ENCODE measurements at regions of chr2 and their contacts with region 1.

Region 1: GRCh38 chr2:216666461-216667233 is 28.7 kb downstream of the IGFBP5 start:
- DNase-seq: peak; percentile 62 to 86 (median 77)
- H3K4me3 ChIP-seq: no peak overlapping the region
- H3K27ac ChIP-seq: no peak overlapping the region
- H3K4me1 ChIP-seq: peaks cover 12% of the 10 kb centered on the region
- H3K27me3 ChIP-seq: no peaks in the 10 kb centered on the region
- CTCF ChIP-seq: peak; percentile 91 to 96 (median 95)
- EP300 ChIP-seq: no peak
- POLR2A ChIP-seq: no peak

Region 2: GRCh38 chr2:215435809-215436704 is 1230.6 kb before region 1 on chr2 and contains the start of gene FN1:
- intact Hi-C with region 1: loop called in 1 of 4 experiments (anchors 10 kb)
- DNase-seq: peak; percentile 94 to 97 (median 96)
- H3K4me3 ChIP-seq: peak within 1 kb of the TSS; percentile 78
- H3K27ac ChIP-seq: peak within 1 kb of the TSS; percentile 77 to 92
- H3K4me1 ChIP-seq: no peaks in the 10 kb centered on the region
- H3K27me3 ChIP-seq: no peaks in the 10 kb centered on the region
- CTCF ChIP-seq: no peak
- EP300 ChIP-seq: no peak
- POLR2A ChIP-seq: peak; percentile 73
- total RNA-seq, gene FN1: 96.3 to 438 (median 208) TPM

Region 3: DNA sequence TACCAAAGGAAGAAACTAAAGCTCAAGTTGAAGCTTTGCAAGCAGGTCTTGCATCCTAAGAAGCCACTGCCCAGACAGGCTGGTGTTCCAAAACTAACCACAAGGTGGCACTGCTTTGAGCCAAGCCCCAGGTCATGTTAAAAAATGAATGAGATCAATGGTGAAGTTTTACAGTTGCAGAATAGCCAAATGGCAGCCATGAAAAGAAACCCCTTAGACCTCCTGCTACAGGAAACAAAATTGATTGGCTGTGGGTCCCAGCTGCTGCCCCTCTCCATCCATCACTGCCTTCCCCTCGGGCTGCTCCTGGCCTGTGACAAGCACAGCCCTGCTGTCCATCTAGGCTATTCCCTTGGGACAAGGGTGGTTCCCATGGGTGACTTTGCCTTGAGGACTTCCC is 632.6 kb before region 1 on chr2:
- intact Hi-C with region 1: loop called in 1 of 4 experiments (anchors 10 kb)
- DNase-seq: peak; percentile 19 to 69 (median 62)
- H3K4me3 ChIP-seq: no peak overlapping the region
- H3K27ac ChIP-seq: no peak overlapping the region
- H3K4me1 ChIP-seq: peaks cover 2% of the 10 kb centered on the region
- H3K27me3 ChIP-seq: no peaks in the 10 kb centered on the region
- CTCF ChIP-seq: peak; percentile 33 to 46 (median 34)
- EP300 ChIP-seq: no peak
- POLR2A ChIP-seq: no peak

Region 4: DNA sequence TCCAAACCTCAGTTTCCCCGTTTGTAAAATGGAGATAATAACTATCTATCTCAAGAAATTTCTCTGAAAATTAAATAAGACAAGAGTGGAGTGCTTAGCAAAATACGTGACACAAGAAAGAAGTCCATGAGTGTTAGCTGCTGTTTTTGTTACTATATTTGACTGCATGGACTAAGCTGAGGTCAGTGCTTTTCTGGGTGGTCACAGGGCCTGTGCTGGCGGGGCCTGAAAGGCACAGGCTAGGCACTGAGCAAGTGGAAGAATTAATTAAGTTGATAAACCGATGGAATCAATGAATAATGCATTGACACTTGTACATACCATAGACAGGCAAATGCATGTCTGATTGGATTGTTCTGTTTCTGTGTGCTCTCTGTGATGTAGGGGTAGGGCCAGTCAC is 140.7 kb before region 1 on chr2:
- intact Hi-C with region 1: loop called in 2 of 4 experiments (anchors 2 kb)
- DNase-seq: no peak
- H3K4me3 ChIP-seq: no peak overlapping the region
- H3K27ac ChIP-seq: no peak overlapping the region
- H3K4me1 ChIP-seq: no peaks in the 10 kb centered on the region
- H3K27me3 ChIP-seq: no peaks in the 10 kb centered on the region
- CTCF ChIP-seq: no peak
- EP300 ChIP-seq: no peak
- POLR2A ChIP-seq: no peak

Region 5: DNA sequence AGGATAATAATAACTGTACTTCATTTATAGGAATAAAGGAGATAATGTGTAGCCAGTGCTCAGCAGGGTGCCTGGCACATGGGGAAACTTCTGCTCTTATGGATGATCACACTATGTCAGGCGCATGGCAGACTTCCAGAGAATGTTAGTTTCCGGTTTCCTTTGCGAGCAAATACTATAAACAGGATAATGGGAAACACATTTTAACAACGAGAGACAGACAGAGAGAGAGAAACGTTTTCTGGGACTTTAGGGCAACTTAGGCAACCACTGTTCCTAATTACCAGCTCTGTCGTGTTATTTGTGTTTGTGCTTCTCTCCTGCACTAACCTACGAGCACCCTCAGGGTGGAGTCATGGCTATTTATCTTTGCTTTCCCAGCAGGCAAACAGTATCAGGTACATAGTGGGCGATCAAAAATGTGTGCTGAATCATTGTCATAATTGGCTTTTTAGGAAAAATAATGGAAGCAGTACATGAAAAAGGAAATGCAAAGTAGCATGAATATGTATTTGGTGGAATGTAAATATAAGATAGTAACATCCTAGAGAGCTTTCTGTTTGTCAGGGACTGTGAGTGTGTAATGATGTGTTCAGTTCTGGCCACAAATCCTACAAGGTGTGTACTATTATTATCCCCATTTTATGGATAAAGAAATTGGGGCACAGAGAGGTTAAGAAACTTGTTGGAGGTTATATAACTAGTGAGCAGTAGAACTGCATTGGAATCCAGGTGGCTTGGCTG is 70.2 kb before region 1 on chr2:
- intact Hi-C with region 1: loop called in 1 of 4 experiments (anchors 5 kb)
- DNase-seq: peak in 3 of 5 donors; percentile 31 to 44 (median 39)
- H3K4me3 ChIP-seq: no peak overlapping the region
- H3K27ac ChIP-seq: no peak overlapping the region
- H3K4me1 ChIP-seq: peaks cover 3% of the 10 kb centered on the region
- H3K27me3 ChIP-seq: no peaks in the 10 kb centered on the region
- CTCF ChIP-seq: no peak
- EP300 ChIP-seq: no peak
- POLR2A ChIP-seq: no peak

Region 6: GRCh38 chr2:216717491-216717901 is 50.8 kb after region 1 on chr2:
- intact Hi-C with region 1: no loop called
- DNase-seq: no peak
- H3K4me3 ChIP-seq: no peak overlapping the region
- H3K27ac ChIP-seq: no peak overlapping the region
- H3K4me1 ChIP-seq: peaks cover 7% of the 10 kb centered on the region
- H3K27me3 ChIP-seq: no peaks in the 10 kb centered on the region
- CTCF ChIP-seq: no peak
- EP300 ChIP-seq: no peak
- POLR2A ChIP-seq: no peak

Measured in ovary (tissue), 10 donors.